Common myeloid progenitor, CD34-positive (primary cell): ENCODE measurements at regions of chr1 and their contacts with region 1.

Region 1: GRCh38 chr1:184792450-184792969 is 37.9 kb upstream of the EDEM3 start:
- DNase-seq: peak; percentile 78 to 95 (median 90)
- H3K4me3 ChIP-seq: peak overlapping the region in 2 of 7 experiments; percentile 17 to 43
- H3K27ac ChIP-seq: peak overlapping the region; percentile 39 to 48
- H3K4me1 ChIP-seq: peaks cover 5 to 34% (median 21%) of the 10 kb centered on the region in 4 experiments
- H3K27me3 ChIP-seq: no peaks in the 10 kb centered on the region

Region 2: GRCh38 chr1:184982002-184982954 is 189.8 kb after region 1 on chr1:
- CTCF ChIA-PET with region 1: interaction called, 14 read pairs
- POLR2A ChIA-PET with region 1: no interaction called
- DNase-seq: peak; percentile 81 to 93 (median 91)
- H3K4me3 ChIP-seq: peak overlapping the region in 1 of 7 experiments; percentile 14
- H3K27ac ChIP-seq: no peak overlapping the region
- H3K4me1 ChIP-seq: peaks cover 0 to 2% (median 0%) of the 10 kb centered on the region in 4 experiments
- H3K27me3 ChIP-seq: no peaks in the 10 kb centered on the region